AG04449 (cell line): ENCODE measurements at regions of chr15 and their contacts with region 1.

Region 1: DNA sequence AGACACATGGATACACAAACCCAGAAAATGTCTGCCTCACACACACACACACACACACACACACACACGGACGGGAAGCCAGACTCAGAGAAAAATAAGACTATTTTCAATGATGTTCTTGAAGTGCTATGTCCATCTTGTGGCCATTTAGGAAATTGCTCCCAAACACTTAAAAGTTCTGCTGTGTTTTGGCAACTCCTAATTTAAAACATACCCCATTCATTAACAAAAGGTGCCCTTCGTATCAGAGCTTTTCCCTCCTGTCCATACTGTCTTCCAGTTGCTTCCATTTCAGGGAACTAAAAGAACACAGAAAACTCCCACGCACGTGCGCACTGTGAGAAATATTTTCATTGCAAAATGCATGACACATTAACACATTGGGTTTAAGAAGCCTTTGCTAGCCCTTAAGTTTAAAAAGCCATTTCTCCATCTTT is 44.6 kb downstream of the SLC12A1 start:
- DNase-seq: peak; percentile 40
- H3K4me3 ChIP-seq: no peak overlapping the region
- CTCF ChIP-seq: peak; percentile 51

Region 2: DNA sequence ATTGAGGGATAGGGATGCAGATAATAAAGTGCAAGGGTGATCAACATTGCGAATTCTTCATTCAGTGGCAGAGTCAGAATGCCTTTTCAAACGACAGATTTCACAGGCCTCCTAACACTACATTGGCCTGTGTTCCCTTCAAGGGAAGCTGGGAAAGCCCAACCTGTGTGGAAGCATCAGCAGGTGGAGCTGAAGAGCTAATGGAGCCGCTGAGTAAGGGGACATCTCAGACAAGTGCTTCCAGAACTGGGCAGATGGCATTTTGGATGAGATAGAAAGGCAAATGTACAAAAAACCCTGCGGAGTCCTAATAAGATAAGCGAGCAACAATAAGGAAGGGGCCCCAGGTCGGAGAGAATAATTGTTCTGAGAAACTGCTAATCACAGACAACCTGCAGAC is 138.4 kb before region 1 on chr15:
- CTCF ChIA-PET with region 1: interaction called, 59 read pairs
- POLR2A ChIA-PET with region 1: no interaction called
- DNase-seq: no peak
- H3K4me3 ChIP-seq: no peak overlapping the region
- CTCF ChIP-seq: peak; percentile 48

Region 3: GRCh38 chr15:48440084-48440483 is 189.4 kb after region 1 on chr15:
- CTCF ChIA-PET with region 1: no interaction called
- POLR2A ChIA-PET with region 1: no interaction called
- DNase-seq: peak; percentile 85
- H3K4me3 ChIP-seq: no peak overlapping the region
- CTCF ChIP-seq: no peak